Activated CD4-positive, alpha-beta memory T cell treated with anti-CD3 and anti-CD28 coated beads for 36 hours (primary cell): ENCODE measurements at regions of chr4 and their contacts with region 1.

Region 1: GRCh38 chr4:158722917-158723793 is at the start of gene PPID:
- DNase-seq: peak; percentile 91
- H3K4me3 Mint-ChIP-seq: peak within 1 kb of the TSS; percentile 93
- H3K27ac Mint-ChIP-seq: peak within 1 kb of the TSS; percentile 99
- H3K4me1 Mint-ChIP-seq: peaks cover 54% of the 10 kb centered on the region
- H3K27me3 Mint-ChIP-seq: peaks cover 8% of the 10 kb centered on the region
- total RNA-seq, gene PPID: 66.4 to 67.2 TPM

Region 2: GRCh38 chr4:158384407-158384806 is 338.7 kb before region 1 on chr4:
- CTCF ChIA-PET with region 1: no interaction called
- POLR2A ChIA-PET with region 1: no interaction called
- intact Hi-C with region 1: no loop called
- DNase-seq: no peak
- H3K4me3 Mint-ChIP-seq: no peak overlapping the region
- H3K27ac Mint-ChIP-seq: no peak overlapping the region
- H3K4me1 Mint-ChIP-seq: no peaks in the 10 kb centered on the region
- H3K27me3 Mint-ChIP-seq: no peaks in the 10 kb centered on the region

Region 3: GRCh38 chr4:158768555-158769174 is 45.5 kb after region 1 on chr4 and contains the start of gene FNIP2:
- CTCF ChIA-PET with region 1: no interaction called
- POLR2A ChIA-PET with region 1: interaction called, 12 read pairs
- intact Hi-C with region 1: loop called (anchors 1 kb)
- DNase-seq: peak; percentile 73
- H3K4me3 Mint-ChIP-seq: peak within 1 kb of the TSS; percentile 100
- H3K27ac Mint-ChIP-seq: peak within 1 kb of the TSS; percentile 91
- H3K4me1 Mint-ChIP-seq: peaks cover 43% of the 10 kb centered on the region
- H3K27me3 Mint-ChIP-seq: peaks cover 2% of the 10 kb centered on the region
- total RNA-seq, gene FNIP2: 17.7 to 19.4 TPM

Region 4: DNA sequence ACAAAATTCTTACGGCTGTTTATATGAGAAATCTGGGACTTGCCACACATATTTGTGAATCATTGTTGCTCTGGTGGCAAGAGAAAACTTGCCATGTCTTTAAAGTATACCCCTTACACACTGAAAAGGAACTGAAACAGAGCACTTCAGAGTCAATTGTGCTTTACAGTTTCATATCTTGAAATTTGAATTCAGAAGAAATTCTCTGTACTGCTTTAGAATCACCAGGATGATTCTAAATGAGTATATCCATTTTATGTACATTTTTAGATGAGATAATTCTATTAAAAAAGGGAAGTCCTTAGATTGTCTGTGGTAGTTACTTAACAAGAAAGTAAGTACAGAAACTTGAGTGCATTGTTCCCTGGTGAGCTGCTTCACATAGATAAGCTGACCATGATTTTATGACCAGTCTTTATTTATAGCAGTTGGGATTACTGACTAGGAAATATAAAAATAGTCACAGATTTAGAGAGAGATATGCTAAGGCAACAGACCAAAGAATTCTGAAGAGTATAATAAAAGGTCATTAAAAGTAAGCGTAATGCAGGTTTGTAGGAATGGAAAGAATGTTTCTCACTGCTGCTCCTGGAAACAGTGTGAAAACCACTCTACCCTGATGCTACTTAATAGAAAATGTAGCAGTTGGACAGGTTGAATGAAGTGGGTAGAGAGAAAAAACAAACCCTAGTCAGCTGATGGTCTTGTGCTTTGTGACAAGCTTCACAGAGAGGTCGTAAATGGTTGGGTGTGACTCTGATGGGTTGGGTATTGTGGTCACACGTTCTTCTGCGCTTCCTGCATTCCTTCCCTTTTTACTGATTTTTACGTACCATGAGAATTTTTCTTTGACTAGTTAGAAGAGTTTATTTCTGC is 86.7 kb after region 1 on chr4:
- CTCF ChIA-PET with region 1: interaction called, 4 read pairs
- POLR2A ChIA-PET with region 1: no interaction called
- intact Hi-C with region 1: loop called (anchors 1 kb)
- DNase-seq: no peak
- H3K4me3 Mint-ChIP-seq: peak overlapping the region; percentile 36
- H3K27ac Mint-ChIP-seq: peak overlapping the region; percentile 64
- H3K4me1 Mint-ChIP-seq: peaks cover 46% of the 10 kb centered on the region
- H3K27me3 Mint-ChIP-seq: no peaks in the 10 kb centered on the region

Region 5: DNA sequence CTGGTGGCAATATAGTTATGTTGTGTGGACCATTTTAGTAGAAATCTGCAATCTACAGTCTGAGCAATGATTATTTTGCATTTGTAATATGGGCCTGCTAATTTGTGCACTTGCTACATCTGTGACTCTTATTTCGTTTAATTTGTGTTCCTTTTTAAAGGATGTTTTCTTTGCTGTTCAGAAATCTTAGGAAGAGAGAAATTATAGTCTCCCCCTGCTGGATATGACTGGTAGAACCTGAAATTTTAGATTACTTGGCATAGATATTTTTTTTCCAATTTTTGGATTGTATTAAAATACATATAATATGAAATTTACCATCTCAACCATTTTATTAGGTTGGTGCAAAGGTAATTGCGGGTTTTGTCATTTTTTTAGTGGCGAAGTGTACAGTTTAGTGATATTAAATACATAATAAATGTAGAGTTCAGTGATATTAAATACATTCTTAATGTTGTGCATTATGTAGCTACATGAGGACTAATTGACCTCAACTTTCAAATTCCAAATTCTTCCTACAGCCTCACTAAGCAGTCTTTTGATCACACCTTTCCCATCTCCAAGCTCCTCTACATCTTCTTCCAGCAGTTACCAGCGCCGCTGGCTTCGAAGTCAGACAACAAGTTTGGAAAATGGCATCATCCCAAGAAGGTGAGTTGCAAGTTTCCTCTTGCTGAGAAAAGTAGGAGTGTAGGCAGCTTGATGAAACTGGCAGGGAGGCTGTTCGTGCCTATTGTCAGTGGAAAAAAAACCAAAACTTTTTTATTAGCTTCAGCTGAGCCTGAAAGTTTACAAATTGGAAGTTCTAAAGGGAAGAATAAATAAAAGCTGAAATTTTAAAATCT is 127.9 kb after region 1 on chr4:
- CTCF ChIA-PET with region 1: interaction called, 14 read pairs
- POLR2A ChIA-PET with region 1: interaction called, 3 read pairs
- intact Hi-C with region 1: no loop called
- DNase-seq: no peak
- H3K4me3 Mint-ChIP-seq: no peak overlapping the region
- H3K27ac Mint-ChIP-seq: no peak overlapping the region
- H3K4me1 Mint-ChIP-seq: peaks cover 18% of the 10 kb centered on the region
- H3K27me3 Mint-ChIP-seq: no peaks in the 10 kb centered on the region

Region 6: GRCh38 chr4:159077702-159078495 is 354.7 kb after region 1 on chr4:
- CTCF ChIA-PET with region 1: no interaction called
- POLR2A ChIA-PET with region 1: interaction called, 4 read pairs
- intact Hi-C with region 1: loop called (anchors 1 kb)
- DNase-seq: no peak
- H3K4me3 Mint-ChIP-seq: no peak overlapping the region
- H3K27ac Mint-ChIP-seq: no peak overlapping the region
- H3K4me1 Mint-ChIP-seq: peaks cover 22% of the 10 kb centered on the region
- H3K27me3 Mint-ChIP-seq: no peaks in the 10 kb centered on the region

Region 7: DNA sequence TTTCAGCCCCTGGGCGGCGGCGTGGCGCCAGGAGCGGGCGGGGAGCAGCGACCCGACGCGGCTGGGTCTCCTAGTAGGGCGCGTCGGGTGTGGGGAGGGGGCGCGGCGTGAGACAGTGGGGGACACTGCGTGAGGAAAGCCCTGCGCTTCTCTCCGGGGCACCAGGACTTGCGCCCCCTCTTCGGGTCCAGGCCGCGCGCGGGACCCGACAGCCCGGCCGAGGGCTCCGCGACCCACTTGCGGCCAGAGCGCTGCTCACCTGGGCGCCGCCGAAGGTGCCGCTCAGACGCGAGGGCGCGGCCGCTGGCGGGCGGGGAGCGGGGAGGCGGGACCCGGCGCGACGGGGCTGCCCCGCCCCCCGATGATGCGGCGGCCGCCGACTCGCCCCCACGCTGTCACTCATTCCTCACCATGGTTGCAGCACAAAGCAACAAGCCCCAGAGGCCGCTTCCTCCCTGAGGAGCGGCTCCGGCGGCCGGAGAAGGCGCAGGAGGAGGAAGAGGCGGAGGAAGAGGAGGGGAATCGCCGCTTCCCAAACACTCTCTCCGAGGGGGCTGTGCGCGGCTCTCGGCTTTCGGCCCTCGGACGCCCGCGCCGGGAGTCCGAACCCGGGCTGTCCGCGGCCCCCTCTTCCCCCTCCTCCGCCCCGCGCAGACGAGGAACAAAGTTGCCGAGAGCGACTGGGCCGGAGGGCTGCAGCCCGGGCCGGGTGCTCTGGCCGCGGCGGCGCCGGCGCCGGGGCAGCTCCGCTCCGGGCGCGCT is 379.6 kb after region 1 on chr4 and contains the start of gene RAPGEF2:
- CTCF ChIA-PET with region 1: no interaction called
- POLR2A ChIA-PET with region 1: interaction called, 3 read pairs
- intact Hi-C with region 1: loop called (anchors 1 kb)
- DNase-seq: peak; percentile 91
- H3K4me3 Mint-ChIP-seq: peak within 1 kb of the TSS; percentile 79
- H3K27ac Mint-ChIP-seq: peak within 1 kb of the TSS; percentile 81
- H3K4me1 Mint-ChIP-seq: peaks cover 46% of the 10 kb centered on the region
- H3K27me3 Mint-ChIP-seq: peaks cover 5% of the 10 kb centered on the region
- total RNA-seq, gene RAPGEF2: 18.6 to 22.0 TPM

Region 8: DNA sequence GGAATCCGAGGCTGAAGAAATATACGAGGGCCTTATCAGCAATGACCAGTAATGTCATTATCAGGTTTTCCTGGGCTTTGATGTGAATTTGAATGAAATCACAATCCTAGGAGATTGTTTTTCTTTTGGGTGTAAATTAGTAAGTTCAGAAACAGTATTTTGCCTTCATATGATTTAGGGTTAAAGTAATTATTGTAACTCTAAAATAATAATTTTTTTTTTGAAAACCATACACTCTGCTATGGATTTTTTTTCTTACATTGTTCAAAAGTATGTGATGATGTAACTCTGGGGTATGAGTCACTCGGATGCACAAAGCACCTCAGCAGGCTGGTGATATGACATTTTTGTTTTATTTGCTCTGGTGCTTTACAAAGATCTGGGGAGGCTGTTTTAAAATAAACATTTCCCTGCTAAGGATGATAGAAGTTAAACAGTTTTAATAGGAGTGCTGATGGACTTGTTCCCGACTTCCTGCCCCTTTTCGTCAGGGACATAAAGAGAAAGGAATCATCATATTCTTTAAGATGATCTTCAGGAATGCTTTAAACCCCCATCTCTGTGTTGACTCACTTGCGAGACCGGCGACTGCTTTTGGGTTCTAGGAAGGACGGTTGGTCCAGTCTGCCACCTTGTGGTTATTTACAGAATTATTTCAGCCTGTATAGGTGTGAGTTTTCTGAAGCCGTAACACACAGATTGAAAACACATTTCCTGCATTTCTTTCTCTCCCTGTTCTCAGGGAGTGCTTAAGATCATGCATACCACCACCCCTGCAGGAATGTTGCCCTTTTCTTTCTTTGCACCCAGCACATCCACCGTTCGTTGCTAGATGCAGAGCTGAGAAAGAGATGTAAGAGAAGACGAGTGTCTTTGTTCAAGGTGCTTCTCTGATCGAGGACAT is 452.2 kb after region 1 on chr4:
- CTCF ChIA-PET with region 1: no interaction called
- POLR2A ChIA-PET with region 1: no interaction called
- intact Hi-C with region 1: loop called (anchors 1 kb)
- DNase-seq: peak; percentile 69
- H3K4me3 Mint-ChIP-seq: no peak overlapping the region
- H3K27ac Mint-ChIP-seq: no peak overlapping the region
- H3K4me1 Mint-ChIP-seq: peaks cover 56% of the 10 kb centered on the region
- H3K27me3 Mint-ChIP-seq: no peaks in the 10 kb centered on the region